BJ (cell line): ENCODE measurements at regions of chr6 and their contacts with region 1.

Region 1: GRCh38 chr6:85421997-85422401 is 27.9 kb upstream of the NT5E start:
- DNase-seq: no peak
- H3K4me3 ChIP-seq: no peak overlapping the region
- H3K27me3 ChIP-seq: no peaks in the 10 kb centered on the region
- CTCF ChIP-seq: no peak

Region 2: DNA sequence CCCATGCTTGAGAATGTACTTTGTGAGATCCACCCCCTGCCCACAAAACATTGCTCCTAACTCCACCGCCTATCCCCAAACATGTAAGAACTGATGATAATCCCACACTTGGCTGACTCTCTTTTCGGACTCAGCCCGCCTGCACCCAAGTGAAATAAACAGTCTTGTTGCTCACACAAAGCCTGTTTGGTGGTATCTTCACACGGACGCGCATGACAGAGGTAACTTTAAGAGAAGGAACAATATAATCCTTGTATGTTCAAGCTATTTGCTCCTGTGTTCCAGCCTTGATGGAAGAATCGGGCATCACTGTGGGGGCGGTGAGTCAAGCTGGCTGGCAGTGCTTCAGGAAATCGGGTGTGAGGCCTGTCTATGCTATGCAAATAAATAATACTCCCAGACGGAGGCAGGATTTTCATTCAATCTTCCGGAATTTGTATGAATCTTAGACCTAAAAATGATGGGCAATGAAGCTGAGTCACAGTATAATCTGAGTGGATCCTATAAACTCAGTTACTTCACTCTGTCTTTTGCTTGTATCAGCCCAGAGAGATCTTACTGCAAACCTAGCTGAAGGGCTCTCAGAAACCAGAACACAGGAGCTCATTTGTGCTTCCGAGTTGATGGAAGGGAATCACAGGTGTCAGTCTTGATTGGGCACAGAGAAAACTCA is 17.4 kb before region 1 on chr6:
- CTCF ChIA-PET with region 1: interaction called, 12 read pairs
- POLR2A ChIA-PET with region 1: interaction called, 3 read pairs
- DNase-seq: peak; percentile 74
- H3K4me3 ChIP-seq: no peak overlapping the region
- H3K27me3 ChIP-seq: no peaks in the 10 kb centered on the region
- CTCF ChIP-seq: no peak